T-cell (primary cell): ENCODE measurements at regions of chr10 and their contacts with region 1.

Region 1: GRCh38 chr10:110803830-110804338 is 67.8 kb upstream of the PDCD4 start:
- DNase-seq: peak in 24 of 35 experiments; percentile 11 to 70 (median 29)
- ATAC-seq: peak; percentile 46 to 73 (median 62)
- H3K4me3 ChIP-seq: peak overlapping the region in 1 of 2 donors; percentile 11
- H3K4me3 Mint-ChIP-seq: peak overlapping the region; percentile 5 to 59 (median 24)
- H3K27ac ChIP-seq: peak overlapping the region; percentile 43
- H3K27ac Mint-ChIP-seq: peak overlapping the region; percentile 86 to 95
- H3K4me1 ChIP-seq: peaks cover 30 to 39% of the 10 kb centered on the region in 2 experiments
- H3K4me1 Mint-ChIP-seq: peaks cover 44 to 58% (median 45%) of the 10 kb centered on the region in 3 donors
- H3K27me3 ChIP-seq: no peaks in the 10 kb centered on the region
- H3K27me3 Mint-ChIP-seq: no peaks in the 10 kb centered on the region

Region 2: DNA sequence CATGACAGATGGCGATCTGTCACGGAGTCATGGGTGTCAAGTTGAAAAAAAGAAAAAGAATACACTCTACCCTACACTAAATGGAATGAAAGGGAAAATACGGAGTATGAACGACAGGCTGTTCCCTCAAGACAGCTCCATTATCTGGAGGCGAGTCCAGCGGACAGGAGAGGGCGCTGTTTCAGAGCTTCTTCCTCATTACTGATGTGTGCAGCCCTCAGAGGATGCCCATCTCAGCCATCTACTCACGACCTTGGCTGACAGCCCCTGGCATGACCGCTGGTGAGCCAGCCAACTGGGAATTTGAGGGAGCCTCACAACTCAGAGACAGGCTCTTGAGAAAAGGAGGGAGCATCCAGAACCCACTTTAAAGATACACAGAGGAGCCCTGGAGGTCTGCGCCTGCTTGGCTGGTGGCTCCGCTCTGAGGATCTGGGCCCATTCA is 449.5 kb before region 1 on chr10:
- CTCF ChIA-PET with region 1: no interaction called
- POLR2A ChIA-PET with region 1: no interaction called
- DNase-seq: peak; percentile 35 to 86 (median 72)
- ATAC-seq: peak; percentile 25 to 69 (median 52)
- H3K4me3 ChIP-seq: no peak overlapping the region
- H3K4me3 Mint-ChIP-seq: peak overlapping the region in 1 of 3 donors; percentile 42
- H3K27ac ChIP-seq: peak overlapping the region; percentile 35
- H3K27ac Mint-ChIP-seq: peak overlapping the region; percentile 69 to 79
- H3K4me1 ChIP-seq: peaks cover 21 to 59% of the 10 kb centered on the region in 2 experiments
- H3K4me1 Mint-ChIP-seq: peaks cover 53 to 58% (median 54%) of the 10 kb centered on the region in 3 donors
- H3K27me3 ChIP-seq: peaks cover 0 to 15% of the 10 kb centered on the region in 2 experiments
- H3K27me3 Mint-ChIP-seq: no peaks in the 10 kb centered on the region

Region 3: GRCh38 chr10:110643653-110644597 is 160.0 kb before region 1 on chr10 and contains the start of gene RBM20:
- CTCF ChIA-PET with region 1: no interaction called
- POLR2A ChIA-PET with region 1: no interaction called
- DNase-seq: peak in 11 of 35 experiments; percentile 1 to 32 (median 15)
- ATAC-seq: peak; percentile 55 to 69 (median 67)
- H3K4me3 ChIP-seq: peak within 1 kb of the TSS; percentile 38 to 76
- H3K4me3 Mint-ChIP-seq: peak within 1 kb of the TSS; percentile 73 to 81 (median 75)
- H3K27ac ChIP-seq: no peak within 1 kb of the TSS
- H3K27ac Mint-ChIP-seq: no peak within 1 kb of the TSS
- H3K4me1 ChIP-seq: peaks cover 11 to 18% of the 10 kb centered on the region in 2 experiments
- H3K4me1 Mint-ChIP-seq: peaks cover 26 to 34% (median 29%) of the 10 kb centered on the region in 3 donors
- H3K27me3 ChIP-seq: peaks cover 15 to 29% of the 10 kb centered on the region in 2 experiments
- H3K27me3 Mint-ChIP-seq: peaks cover 43 to 63% of the 10 kb centered on the region in 2 donors
- total RNA-seq, gene RBM20: 0.09 to 3.0 (median 0.33) TPM

Region 4: GRCh38 chr10:110857265-110858158 is 53.6 kb after region 1 on chr10:
- CTCF ChIA-PET with region 1: interaction called, 4 to 23 read pairs
- POLR2A ChIA-PET with region 1: interaction called in 1 of 2 experiments, 3 read pairs
- DNase-seq: peak in 5 of 35 experiments; percentile 22 to 60 (median 40)
- ATAC-seq: peak; percentile 13 to 61 (median 37)
- H3K4me3 ChIP-seq: no peak overlapping the region
- H3K4me3 Mint-ChIP-seq: peak overlapping the region; percentile 6 to 72 (median 29)
- H3K27ac ChIP-seq: peak overlapping the region; percentile 96
- H3K27ac Mint-ChIP-seq: peak overlapping the region; percentile 96
- H3K4me1 ChIP-seq: peaks cover 67 to 74% of the 10 kb centered on the region in 2 experiments
- H3K4me1 Mint-ChIP-seq: peaks cover 87 to 92% (median 91%) of the 10 kb centered on the region in 3 donors
- H3K27me3 ChIP-seq: no peaks in the 10 kb centered on the region
- H3K27me3 Mint-ChIP-seq: no peaks in the 10 kb centered on the region

Region 5: GRCh38 chr10:110893559-110894179 is 89.8 kb after region 1 on chr10:
- CTCF ChIA-PET with region 1: interaction called, 5 to 20 read pairs
- POLR2A ChIA-PET with region 1: interaction called in 1 of 2 experiments, 3 read pairs
- DNase-seq: peak in 1 of 35 experiments; percentile 72
- ATAC-seq: peak; percentile 56 to 87 (median 82)
- H3K4me3 ChIP-seq: no peak overlapping the region
- H3K4me3 Mint-ChIP-seq: no peak overlapping the region
- H3K27ac ChIP-seq: no peak overlapping the region
- H3K27ac Mint-ChIP-seq: no peak overlapping the region
- H3K4me1 ChIP-seq: peaks cover 3 to 15% of the 10 kb centered on the region in 2 experiments
- H3K4me1 Mint-ChIP-seq: peaks cover 62 to 65% (median 65%) of the 10 kb centered on the region in 3 donors
- H3K27me3 ChIP-seq: no peaks in the 10 kb centered on the region
- H3K27me3 Mint-ChIP-seq: no peaks in the 10 kb centered on the region

Region 6: DNA sequence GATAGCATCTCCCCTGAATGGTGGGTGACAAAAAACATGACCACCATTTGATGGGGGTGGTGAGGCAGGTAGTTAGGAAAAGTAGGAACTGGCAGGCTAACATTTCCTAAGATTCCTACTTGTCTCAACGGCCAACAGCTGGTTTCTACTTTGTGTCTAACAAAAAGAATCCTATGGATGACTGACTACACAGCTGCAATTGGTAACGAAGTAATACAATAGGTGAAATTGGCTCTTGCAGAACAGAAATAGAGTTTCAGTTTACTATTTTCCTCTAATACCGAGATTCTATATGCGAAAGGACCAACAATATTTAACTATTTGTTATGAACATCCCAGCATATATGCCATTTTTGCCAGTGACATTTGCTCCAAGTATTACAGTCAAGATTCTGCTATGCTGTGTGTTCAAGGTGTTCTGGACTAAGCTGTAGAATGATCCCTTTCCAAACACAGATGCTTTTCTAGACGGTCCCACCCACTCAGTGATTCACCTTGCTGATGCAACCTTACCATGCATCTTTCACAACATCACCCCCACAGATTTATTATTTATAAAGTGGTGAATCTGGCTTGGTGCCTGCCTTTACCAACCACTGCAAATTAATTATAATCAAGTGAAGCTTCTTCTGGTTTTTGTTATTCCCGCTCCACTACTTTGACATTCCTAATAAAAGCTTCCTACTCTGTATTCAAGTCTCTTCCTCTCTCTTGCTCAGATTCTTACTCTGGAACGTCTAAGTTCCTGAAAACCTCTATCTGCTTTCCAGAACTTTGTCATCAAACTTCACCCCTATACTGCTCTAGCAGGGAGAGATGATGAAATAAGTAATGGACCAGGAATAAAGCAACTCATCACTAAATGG is 98.3 kb after region 1 on chr10:
- CTCF ChIA-PET with region 1: interaction called, 9 to 11 read pairs
- POLR2A ChIA-PET with region 1: interaction called, 4 to 11 read pairs
- DNase-seq: no peak
- ATAC-seq: peak in 2 of 4 experiments; percentile 18 to 35
- H3K4me3 ChIP-seq: no peak overlapping the region
- H3K4me3 Mint-ChIP-seq: no peak overlapping the region
- H3K27ac ChIP-seq: no peak overlapping the region
- H3K27ac Mint-ChIP-seq: peak overlapping the region; percentile 59 to 83
- H3K4me1 ChIP-seq: no peaks in the 10 kb centered on the region
- H3K4me1 Mint-ChIP-seq: peaks cover 24 to 44% (median 29%) of the 10 kb centered on the region in 3 donors
- H3K27me3 ChIP-seq: no peaks in the 10 kb centered on the region
- H3K27me3 Mint-ChIP-seq: no peaks in the 10 kb centered on the region